ENCODE measurements at regions of chr3 and their contacts with region 1.

Region 1: DNA sequence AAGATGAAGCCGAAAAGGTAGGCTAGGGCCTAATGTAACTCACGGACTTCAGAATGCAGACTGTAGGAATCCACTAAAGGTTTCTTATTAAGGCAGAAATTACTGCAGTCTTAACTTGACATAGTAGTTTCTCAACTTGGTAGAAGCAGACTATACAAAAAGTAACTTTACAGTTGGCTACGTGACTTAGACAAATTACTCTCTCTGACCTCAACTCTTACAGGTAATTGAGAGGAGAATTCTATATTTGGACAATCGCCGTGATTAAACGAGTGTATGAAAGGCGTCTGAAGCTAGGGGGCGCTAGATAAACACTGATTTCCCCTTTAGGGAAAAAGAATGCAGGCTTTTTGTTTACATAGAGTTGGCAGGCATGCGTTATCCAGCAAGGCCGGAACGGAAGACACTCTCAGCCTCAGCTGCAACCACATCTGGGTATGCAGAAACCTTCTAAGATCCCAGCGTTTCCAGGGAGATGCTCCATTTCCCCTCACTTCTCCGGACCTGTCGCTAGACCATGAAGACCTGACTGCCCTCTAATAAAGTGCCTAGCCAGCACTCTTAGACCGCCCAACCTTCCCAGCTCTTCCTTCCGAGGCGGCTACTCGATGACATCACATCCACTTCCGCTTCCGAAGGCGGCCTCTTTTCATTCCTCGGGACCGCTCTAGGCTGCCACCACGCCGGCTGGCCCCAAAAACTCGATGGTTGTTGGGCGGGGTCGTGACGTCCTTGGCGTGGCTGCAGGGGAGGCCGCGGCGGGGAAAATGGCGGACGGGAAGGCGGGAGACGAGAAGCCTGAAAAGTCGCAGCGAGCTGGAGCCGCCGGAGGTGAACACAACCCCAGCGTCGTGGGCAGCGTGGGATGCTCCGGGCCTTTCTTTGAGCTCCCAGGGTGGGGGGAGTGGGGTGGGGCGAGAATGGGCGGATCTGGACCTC is at the start of gene PCNP:
- DNase-seq: peak; percentile 97
- ATAC-seq: peak; percentile 85
- H3K4me3 Mint-ChIP-seq: peak within 1 kb of the TSS; percentile 99
- H3K27ac Mint-ChIP-seq: peak within 1 kb of the TSS; percentile 96
- H3K4me1 Mint-ChIP-seq: peaks cover 45% of the 10 kb centered on the region
- H3K27me3 Mint-ChIP-seq: no peaks in the 10 kb centered on the region
- CTCF ChIP-seq: no peak
- total RNA-seq, gene PCNP: 149 TPM in 2 replicates

Region 2: GRCh38 chr3:100047455-100048141 is 1526.1 kb before region 1 on chr3:
- CTCF ChIA-PET with region 1: no interaction called
- POLR2A ChIA-PET with region 1: no interaction called
- intact Hi-C with region 1: loop called (anchors 10 kb)
- DNase-seq: no peak
- ATAC-seq: peak; percentile 72
- H3K4me3 Mint-ChIP-seq: peak overlapping the region; percentile 81
- H3K27ac Mint-ChIP-seq: peak overlapping the region; percentile 97
- H3K4me1 Mint-ChIP-seq: peaks cover 67% of the 10 kb centered on the region
- H3K27me3 Mint-ChIP-seq: no peaks in the 10 kb centered on the region
- CTCF ChIP-seq: no peak

Region 3: DNA sequence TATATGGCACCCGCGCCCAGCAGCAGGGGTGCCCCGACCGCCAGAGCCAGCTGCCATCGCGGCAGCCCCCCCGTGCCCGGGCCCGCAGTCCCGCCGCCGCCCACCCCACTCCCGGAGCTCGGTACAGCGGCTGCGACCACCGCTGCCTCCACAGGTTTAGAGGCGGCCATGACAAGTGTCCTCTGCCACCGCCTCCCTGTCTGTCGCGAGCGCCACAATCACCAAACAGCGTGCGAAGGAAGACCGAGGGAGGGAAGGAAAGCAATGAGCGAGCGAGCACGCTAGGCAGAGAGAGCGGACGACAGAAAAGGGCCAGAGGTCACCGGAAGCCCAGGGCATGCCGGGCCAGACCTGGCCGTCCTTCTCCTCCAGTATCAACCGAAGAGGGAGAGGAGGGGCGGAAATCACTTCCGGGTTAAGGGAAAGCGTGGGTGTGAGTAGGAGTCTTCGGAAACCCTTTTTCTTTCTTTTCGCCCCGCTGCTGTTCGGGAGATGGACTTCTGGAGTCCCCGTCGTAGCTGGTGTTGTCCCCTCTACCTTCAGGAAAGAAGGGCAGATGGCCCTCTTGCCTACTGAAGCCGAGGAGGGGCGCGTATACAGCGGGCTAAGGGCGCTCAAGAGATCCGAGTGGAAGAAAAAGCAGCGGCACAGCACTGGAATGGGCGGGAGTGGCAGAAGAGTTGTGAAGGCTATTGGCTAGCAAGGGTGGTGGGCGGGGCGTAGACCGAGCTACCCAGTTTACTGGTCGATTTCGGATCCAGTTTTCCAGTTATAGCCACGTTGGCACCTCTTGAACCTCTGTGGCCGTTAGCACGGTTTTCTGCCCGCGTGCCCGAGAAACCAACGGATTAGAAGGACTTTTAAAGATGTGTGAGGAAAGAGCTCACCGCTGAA is 1172.7 kb before region 1 on chr3 and contains the starts of genes LNP1 and TOMM70:
- CTCF ChIA-PET with region 1: no interaction called
- POLR2A ChIA-PET with region 1: interaction called, 3 read pairs
- intact Hi-C with region 1: loop called (anchors 1 kb)
- DNase-seq: peak; percentile 86
- ATAC-seq: peak; percentile 92
- H3K4me3 Mint-ChIP-seq: peak within 1 kb of the TSS; percentile 96
- H3K27ac Mint-ChIP-seq: peak within 1 kb of the TSS; percentile 95
- H3K4me1 Mint-ChIP-seq: peaks cover 58% of the 10 kb centered on the region
- H3K27me3 Mint-ChIP-seq: no peaks in the 10 kb centered on the region
- CTCF ChIP-seq: no peak
- total RNA-seq, gene LNP1: 1.7 and 2.4 TPM in 2 replicates
- total RNA-seq, gene TOMM70: 34.5 and 37.3 TPM in 2 replicates

Region 4: DNA sequence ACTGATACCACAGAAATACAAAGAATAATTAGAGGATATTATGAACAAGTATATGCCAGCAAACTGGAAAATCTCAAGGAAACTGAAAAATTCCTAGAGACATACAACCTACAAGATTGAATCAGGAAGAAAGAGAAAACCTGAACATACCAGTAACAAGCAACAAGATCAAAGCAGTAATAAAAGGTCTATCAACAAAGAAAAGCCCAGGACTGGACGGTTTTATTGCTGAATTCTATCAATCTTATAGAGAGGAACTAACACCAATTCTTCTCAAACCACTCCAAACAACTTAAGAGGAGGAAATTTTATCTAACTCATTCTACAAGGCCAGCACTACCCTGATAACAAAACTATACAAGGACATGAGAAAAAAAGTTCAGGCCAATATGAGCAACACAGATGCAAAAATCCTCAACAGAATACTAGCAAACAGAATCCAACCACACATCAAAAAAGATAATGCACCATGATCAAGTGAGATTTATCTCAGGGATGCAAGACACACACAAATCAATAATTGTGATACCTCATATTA is 182.2 kb before region 1 on chr3:
- CTCF ChIA-PET with region 1: no interaction called
- POLR2A ChIA-PET with region 1: interaction called, 16 read pairs
- intact Hi-C with region 1: no loop called
- DNase-seq: no peak
- ATAC-seq: no peak
- H3K4me3 Mint-ChIP-seq: no peak overlapping the region
- H3K27ac Mint-ChIP-seq: peak overlapping the region; percentile 31
- H3K4me1 Mint-ChIP-seq: peaks cover 19% of the 10 kb centered on the region
- H3K27me3 Mint-ChIP-seq: no peaks in the 10 kb centered on the region
- CTCF ChIP-seq: no peak

Region 5: GRCh38 chr3:101544161-101544850 is 29.4 kb before region 1 on chr3:
- CTCF ChIA-PET with region 1: no interaction called
- POLR2A ChIA-PET with region 1: no interaction called
- intact Hi-C with region 1: no loop called
- DNase-seq: no peak
- ATAC-seq: no peak
- H3K4me3 Mint-ChIP-seq: no peak overlapping the region
- H3K27ac Mint-ChIP-seq: no peak overlapping the region
- H3K4me1 Mint-ChIP-seq: no peaks in the 10 kb centered on the region
- H3K27me3 Mint-ChIP-seq: peaks cover 13% of the 10 kb centered on the region
- CTCF ChIP-seq: no peak

Region 6: GRCh38 chr3:101591071-101591470 is 17.4 kb after region 1 on chr3:
- CTCF ChIA-PET with region 1: no interaction called
- POLR2A ChIA-PET with region 1: interaction called, 5 read pairs
- intact Hi-C with region 1: loop called (anchors 2 kb)
- DNase-seq: no peak
- ATAC-seq: no peak
- H3K4me3 Mint-ChIP-seq: no peak overlapping the region
- H3K27ac Mint-ChIP-seq: no peak overlapping the region
- H3K4me1 Mint-ChIP-seq: no peaks in the 10 kb centered on the region
- H3K27me3 Mint-ChIP-seq: no peaks in the 10 kb centered on the region
- CTCF ChIP-seq: no peak

Region 7: DNA sequence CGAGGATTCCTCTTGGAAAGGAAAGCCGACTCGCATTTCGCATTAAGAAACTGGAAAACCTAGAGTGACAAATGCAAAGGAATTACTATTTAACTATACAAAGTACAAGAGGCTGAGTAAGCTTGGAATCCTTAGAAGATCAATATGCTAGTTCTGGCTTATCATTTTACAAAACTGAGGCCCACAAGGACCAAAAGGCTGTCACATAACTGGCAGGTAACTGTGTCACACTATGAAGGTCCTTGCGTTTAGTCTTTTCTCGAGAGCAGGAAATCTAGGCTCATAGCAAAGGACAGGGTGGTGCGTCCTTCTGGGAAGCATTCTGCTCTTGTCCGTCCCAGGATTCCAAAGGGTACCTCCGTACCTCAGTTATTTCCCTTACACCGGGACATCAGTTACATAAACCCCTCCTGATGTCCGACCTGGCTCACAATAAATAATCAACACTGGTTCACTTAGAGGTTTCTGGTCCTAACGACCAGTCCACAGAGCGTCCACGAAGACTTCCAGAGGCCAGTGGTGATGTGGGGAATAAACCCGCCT is 112.2 kb after region 1 on chr3:
- CTCF ChIA-PET with region 1: no interaction called
- POLR2A ChIA-PET with region 1: interaction called, 27 read pairs
- intact Hi-C with region 1: loop called (anchors 1 kb)
- DNase-seq: no peak
- ATAC-seq: peak; percentile 6
- H3K4me3 Mint-ChIP-seq: peak overlapping the region; percentile 100
- H3K27ac Mint-ChIP-seq: peak overlapping the region; percentile 99
- H3K4me1 Mint-ChIP-seq: peaks cover 40% of the 10 kb centered on the region
- H3K27me3 Mint-ChIP-seq: no peaks in the 10 kb centered on the region
- CTCF ChIP-seq: no peak

Region 8: DNA sequence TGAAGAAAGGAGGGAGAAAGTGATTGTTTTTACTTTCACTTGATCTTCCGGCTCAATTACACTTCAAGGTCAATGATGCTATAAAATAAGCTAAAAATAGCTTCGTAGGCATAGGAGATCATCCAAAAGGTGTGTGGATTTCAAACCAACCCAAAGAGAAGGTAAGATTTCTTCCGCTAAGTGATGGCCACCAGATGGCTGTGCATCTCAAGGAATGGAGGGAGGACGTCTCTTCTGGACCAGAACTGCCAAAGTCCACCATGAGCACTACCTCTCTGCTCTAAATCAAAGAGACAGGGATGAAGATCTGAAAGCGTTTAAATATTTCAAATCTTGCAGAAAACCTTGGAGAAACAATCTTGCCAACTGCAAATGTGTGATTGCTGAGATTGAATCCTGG is 662.0 kb after region 1 on chr3:
- CTCF ChIA-PET with region 1: no interaction called
- POLR2A ChIA-PET with region 1: no interaction called
- intact Hi-C with region 1: loop called (anchors 5 kb)
- DNase-seq: no peak
- ATAC-seq: no peak
- H3K4me3 Mint-ChIP-seq: no peak overlapping the region
- H3K27ac Mint-ChIP-seq: no peak overlapping the region
- H3K4me1 Mint-ChIP-seq: peaks cover 46% of the 10 kb centered on the region
- H3K27me3 Mint-ChIP-seq: no peaks in the 10 kb centered on the region
- CTCF ChIP-seq: peak; percentile 51